ENCODE measurements at regions of chr4 and their contacts with region 1.

Region 1: DNA sequence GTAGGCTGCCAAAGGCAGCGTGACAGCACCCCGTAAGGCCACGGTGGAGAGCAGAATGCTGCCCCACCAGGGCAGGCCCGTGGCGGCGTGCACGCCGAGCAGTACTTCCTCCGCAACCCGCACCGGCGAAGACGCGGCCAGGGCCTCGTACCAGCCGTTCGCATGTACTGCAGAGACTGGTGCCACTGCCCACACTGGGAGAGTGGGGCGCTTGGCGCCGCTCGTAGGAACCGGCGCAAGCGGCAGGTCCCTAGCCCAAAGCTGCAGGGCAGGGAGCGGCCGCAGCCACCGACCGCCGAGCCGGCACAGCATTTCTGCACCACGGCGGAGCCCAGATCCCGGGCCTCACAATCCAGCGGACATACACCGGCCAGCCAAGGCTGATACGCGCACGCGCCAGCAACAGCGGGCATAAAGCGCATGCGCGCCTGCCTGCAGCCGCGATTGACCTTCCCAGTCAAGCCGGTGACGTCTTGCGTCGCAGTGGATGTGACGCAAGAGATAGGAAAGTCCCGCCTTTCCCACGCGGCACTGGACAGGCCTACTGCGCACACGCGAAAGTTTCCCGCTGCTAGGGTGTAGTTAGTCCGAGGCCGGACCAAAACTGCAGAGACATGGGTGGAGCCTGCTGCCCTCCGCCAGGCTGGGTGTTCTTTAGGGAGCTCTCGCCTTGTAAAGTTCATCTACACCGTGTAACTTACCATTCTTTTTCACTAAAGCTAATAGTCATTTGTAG is at the start of gene COX18:
- DNase-seq: peak; percentile 96
- H3K4me3 Mint-ChIP-seq: peak within 1 kb of the TSS; percentile 83
- H3K27ac Mint-ChIP-seq: peak within 1 kb of the TSS; percentile 95
- H3K4me1 Mint-ChIP-seq: peaks cover 36% of the 10 kb centered on the region
- H3K27me3 Mint-ChIP-seq: no peaks in the 10 kb centered on the region
- total RNA-seq, gene COX18: 14.5 to 14.9 TPM

Region 2: GRCh38 chr4:73080789-73081188 is 11.3 kb after region 1 on chr4:
- CTCF ChIA-PET with region 1: interaction called, 4 read pairs
- POLR2A ChIA-PET with region 1: interaction called, 32 read pairs
- DNase-seq: no peak
- H3K4me3 Mint-ChIP-seq: no peak overlapping the region
- H3K27ac Mint-ChIP-seq: peak overlapping the region; percentile 29
- H3K4me1 Mint-ChIP-seq: peaks cover 11% of the 10 kb centered on the region
- H3K27me3 Mint-ChIP-seq: no peaks in the 10 kb centered on the region

Region 3: DNA sequence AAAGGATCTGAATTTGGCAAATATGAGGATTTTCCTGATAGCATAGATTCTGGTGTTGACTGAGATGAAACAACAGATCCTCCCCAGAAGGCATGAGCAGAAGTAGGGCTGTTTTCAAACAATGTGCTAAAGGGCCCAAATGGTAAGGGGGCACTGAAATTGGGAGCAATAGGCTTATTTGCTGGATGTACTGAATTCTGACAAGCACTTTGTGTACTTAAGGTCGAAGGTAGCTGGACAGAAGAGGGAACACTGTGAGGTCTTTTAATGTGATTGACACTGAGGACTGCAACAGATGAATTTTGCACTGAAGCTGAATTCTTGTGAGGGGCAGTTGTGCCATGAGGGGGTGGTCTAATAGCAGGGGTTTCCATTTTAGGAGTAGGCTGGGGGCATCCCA is 21.2 kb after region 1 on chr4:
- CTCF ChIA-PET with region 1: interaction called, 3 read pairs
- POLR2A ChIA-PET with region 1: interaction called, 18 read pairs
- DNase-seq: no peak
- H3K4me3 Mint-ChIP-seq: no peak overlapping the region
- H3K27ac Mint-ChIP-seq: no peak overlapping the region
- H3K4me1 Mint-ChIP-seq: peaks cover 8% of the 10 kb centered on the region
- H3K27me3 Mint-ChIP-seq: no peaks in the 10 kb centered on the region

Region 4: GRCh38 chr4:73258686-73259570 is 189.4 kb after region 1 on chr4 and contains the start of gene ANKRD17:
- CTCF ChIA-PET with region 1: interaction called, 18 read pairs
- POLR2A ChIA-PET with region 1: interaction called, 108 read pairs
- DNase-seq: peak; percentile 93
- H3K4me3 Mint-ChIP-seq: peak within 1 kb of the TSS; percentile 100
- H3K27ac Mint-ChIP-seq: peak within 1 kb of the TSS; percentile 100
- H3K4me1 Mint-ChIP-seq: peaks cover 40% of the 10 kb centered on the region
- H3K27me3 Mint-ChIP-seq: no peaks in the 10 kb centered on the region
- total RNA-seq, gene ANKRD17: 45.8 to 46.6 TPM

Measured in activated CD4-positive, alpha-beta memory T cell treated with anti-CD3 and anti-CD28 coated beads, Interleukin-2, amount 10 ng/mL, durations not matched to agents 7 days and 5 days (primary cell).